ENCODE measurements at regions of chr3 and their contacts with region 1.

Region 1: DNA sequence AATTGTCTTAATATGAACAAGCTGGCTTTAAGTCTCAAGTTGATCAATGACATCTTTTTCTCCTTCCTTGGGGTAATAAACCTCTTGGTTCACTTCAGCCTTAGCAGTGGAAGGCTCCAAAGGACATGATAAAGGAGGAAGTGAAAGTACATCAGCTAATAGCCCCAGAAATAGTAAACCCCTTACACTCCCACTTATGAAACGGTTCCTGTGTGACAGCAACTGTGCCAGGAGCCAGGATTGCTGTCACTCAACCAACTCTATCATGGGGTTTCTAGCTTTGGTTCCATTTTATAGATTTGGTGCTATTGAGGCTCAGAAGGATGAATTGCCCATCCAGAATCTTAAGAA is 216.7 kb downstream of the ABHD5 start:
- DNase-seq: no peak
- ATAC-seq: peak; percentile 78
- H3K4me3 Mint-ChIP-seq: peak overlapping the region; percentile 52
- H3K27ac Mint-ChIP-seq: no peak overlapping the region
- H3K4me1 Mint-ChIP-seq: peaks cover 21% of the 10 kb centered on the region
- H3K27me3 Mint-ChIP-seq: no peaks in the 10 kb centered on the region
- CTCF ChIP-seq: no peak

Region 2: DNA sequence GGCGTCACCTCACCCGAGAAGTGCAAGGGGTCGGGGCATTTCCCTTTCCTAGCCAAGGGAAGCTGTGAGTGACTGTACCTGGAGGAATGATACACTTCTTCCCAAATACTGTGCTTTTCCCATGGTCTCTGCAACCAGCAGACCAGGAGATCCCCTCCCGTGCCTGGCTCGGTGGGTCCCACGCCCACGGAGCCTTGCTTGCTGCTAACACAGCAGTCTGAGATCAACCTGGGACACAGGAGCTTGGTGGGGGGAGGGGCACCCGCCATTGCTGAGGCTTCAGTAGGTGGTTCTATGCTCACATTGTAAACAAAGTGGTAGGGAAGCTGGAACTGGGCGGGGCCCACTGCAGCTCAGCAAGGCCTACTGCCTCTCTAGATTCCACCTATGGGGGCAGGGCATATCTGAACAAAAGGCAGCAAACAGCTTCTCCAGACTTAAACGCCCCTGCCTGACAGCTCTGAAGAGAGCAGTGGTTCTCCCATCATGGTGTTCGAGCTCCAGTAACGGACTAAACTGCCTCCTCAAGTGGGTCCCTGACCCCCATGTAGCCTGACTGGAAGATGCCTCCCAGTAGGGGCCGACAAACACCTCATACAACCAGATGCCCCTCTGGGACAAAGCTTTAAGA is 248.1 kb before region 1 on chr3:
- CTCF ChIA-PET with region 1: no interaction called
- POLR2A ChIA-PET with region 1: no interaction called
- intact Hi-C with region 1: no loop called
- DNase-seq: no peak
- ATAC-seq: no peak
- H3K4me3 Mint-ChIP-seq: no peak overlapping the region
- H3K27ac Mint-ChIP-seq: no peak overlapping the region
- H3K4me1 Mint-ChIP-seq: no peaks in the 10 kb centered on the region
- H3K27me3 Mint-ChIP-seq: peaks cover 6% of the 10 kb centered on the region
- CTCF ChIP-seq: no peak

Region 3: DNA sequence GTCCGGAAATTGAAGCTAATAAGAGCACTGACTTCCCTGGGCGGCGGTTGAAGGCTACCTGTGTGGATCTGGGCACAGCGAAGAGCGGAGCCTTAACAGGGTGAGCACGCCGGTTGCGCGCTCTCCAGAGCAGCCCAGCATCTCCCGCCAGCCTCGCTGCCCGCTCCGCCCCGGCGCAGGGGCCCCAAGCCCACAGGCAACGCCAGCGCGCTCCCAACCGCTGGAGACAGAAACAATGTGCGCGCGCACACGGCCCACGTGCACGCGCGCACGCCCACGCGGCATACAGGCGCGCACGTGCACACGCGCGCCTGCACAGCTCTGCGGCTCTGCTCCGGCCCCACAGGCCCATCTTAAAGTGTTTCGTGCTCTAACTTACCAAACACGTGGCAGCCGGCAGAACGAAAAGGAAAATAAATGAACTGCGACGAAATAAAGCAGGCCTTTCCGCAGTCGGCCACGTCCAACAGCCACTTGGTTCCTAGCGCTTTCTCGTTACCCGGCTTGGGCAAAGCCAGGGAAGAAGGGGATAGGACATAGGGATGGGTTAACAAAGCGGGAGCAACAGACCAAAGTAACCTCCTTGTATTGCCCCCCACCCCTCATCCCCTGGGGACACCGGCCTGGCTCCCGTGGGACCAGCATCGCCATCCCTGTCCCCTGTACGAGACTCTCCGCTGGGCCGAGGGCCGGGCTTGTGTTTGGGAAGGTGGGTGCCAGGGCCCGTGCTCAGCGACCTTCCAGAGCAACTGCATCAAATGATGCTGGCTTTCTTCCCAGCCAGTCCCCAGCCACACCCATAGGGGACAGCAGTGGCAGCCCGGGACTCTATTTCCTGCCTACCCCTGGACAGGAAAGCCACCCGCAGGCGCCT is 13.1 kb before region 1 on chr3:
- CTCF ChIA-PET with region 1: no interaction called
- POLR2A ChIA-PET with region 1: interaction called, 6 read pairs
- intact Hi-C with region 1: loop called (anchors 1 kb)
- DNase-seq: peak; percentile 43
- ATAC-seq: peak; percentile 63
- H3K4me3 Mint-ChIP-seq: peak overlapping the region; percentile 83
- H3K27ac Mint-ChIP-seq: peak overlapping the region; percentile 56
- H3K4me1 Mint-ChIP-seq: peaks cover 33% of the 10 kb centered on the region
- H3K27me3 Mint-ChIP-seq: peaks cover 17% of the 10 kb centered on the region
- CTCF ChIP-seq: no peak

Measured in activated B cell treated with CpG ODN at 0.5 μM for 24 hours (primary cell).